ENCODE measurements at regions of chr10 and their contacts with region 1.

Region 1: DNA sequence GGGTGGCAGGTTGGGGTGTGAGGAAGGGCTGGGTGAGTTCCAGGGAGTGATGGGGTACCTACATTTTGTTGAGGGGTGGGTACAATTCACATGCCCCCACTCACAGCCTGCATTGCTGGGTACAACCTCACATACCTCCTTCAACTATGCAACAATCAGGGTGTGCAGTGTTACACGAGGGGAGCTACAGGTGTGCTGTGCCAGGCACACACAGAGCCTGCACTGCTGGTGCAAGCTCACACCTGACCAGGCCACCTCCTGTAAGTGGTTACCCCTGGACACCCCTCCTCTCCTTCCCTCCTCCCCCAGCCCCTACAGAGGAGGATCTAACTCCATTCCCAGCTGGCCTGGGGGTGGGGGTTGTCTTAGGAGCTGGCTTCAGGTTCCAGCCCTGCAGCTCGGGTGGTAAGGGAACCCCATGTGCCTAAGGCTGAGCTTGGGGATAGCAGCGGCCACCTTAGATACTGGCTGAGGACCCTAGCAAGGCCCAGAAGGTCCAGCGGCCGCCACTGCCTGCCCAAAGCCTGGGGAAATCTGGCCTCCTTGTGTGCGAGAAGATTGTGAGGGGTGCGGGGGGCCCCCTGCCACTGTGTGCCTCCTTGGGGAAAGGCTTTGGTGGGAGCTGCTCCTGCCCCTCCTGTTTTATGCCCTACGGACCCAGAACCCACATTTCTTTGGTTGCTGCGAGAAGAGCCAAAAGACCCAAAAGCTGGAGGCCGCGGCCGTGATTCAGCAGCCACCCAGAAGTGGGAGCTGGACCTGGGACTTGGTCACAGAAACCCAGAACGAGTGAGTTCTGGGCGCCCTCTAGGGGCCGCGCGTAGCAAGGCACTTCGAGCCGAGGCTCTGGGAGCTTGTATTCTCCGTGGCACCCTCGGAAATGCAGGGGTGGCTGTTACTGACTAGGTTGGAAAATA is 10.8 kb downstream of the TLX1 start:
- ATAC-seq: peak; percentile 80 to 98 (median 88)
- H3K4me3 ChIP-seq: no peak overlapping the region
- H3K27ac ChIP-seq: no peak overlapping the region
- H3K4me1 ChIP-seq: peaks cover 0 to 7% of the 10 kb centered on the region in 2 donors

Region 2: DNA sequence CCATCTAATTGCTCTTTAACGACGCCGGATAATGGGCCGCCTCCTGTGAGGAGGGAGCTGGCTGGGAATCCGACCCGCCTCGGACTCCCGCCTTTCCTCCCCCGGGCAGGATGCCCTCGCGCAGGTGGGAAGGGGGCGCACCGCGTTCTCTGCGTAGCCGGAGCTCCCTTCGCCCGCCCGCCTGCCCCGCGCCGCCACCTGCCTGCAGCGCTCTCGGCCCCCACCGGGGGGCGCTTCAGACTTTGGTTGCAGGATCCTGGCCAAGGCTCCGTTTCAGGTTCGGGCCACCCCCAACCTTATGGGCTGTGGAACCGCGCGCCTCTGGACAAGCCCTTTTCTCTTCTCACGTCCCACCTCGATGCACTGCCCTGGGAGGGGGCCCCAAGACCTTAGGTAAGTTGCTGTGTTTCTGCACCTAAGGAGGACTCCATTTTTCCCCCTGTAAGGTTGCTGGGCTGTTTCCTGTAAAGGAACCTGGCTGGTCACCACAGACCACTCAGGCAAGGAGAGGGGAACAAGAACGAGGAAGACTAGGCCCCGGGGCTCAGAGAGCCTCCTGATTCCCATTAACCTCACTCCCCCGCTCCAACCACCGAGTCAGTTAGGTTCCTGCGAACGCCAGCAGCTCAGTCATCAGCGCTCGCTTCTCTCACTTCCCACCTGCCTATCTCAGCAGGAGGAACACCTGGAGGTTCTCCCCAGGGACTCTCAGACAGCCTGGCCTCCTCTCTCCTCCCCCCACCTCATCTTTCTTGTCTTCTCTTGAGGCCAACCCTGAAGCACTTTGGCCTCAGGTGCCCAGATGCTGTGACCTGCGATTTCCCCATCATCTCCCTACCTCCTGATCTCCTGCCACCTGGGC is 91.4 kb before region 1 on chr10:
- in situ Hi-C with region 1: loop called in 1 of 9 experiments (anchors 10 kb)
- ATAC-seq: peak; percentile 49 to 95 (median 68)
- H3K4me3 ChIP-seq: no peak overlapping the region
- H3K27ac ChIP-seq: no peak overlapping the region
- H3K4me1 ChIP-seq: peaks cover 4 to 16% of the 10 kb centered on the region in 2 donors

Region 3: DNA sequence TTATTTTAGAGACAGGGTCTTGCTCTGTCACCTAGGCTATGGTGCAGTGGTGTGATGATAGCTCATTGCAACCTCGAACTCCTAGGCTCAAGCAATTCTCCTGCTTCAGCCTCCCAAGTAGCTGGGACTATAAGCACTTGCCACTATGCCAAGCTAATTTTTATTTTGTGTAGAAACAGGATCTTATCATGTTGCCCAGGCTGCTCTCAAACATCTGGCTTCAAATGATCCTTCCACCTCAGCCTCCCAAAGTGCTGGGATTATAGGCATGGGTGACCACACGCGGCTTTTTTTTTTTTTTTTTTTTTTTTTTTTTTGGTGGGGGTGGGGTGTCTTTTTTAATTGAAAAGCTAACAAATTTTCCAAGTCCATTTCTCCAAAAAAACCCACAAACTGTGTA is 941.7 kb after region 1 on chr10:
- in situ Hi-C with region 1: no loop called
- ATAC-seq: no peak
- H3K4me3 ChIP-seq: no peak overlapping the region
- H3K27ac ChIP-seq: no peak overlapping the region
- H3K4me1 ChIP-seq: no peaks in the 10 kb centered on the region